Breast epithelium (tissue), 4 donors: ENCODE measurements at regions of chr11 and their contacts with region 1.

Region 1: GRCh38 chr11:87840786-87841185 is 334.5 kb downstream of the RAB38 start:
- DNase-seq: no peak
- H3K4me3 ChIP-seq: no peak overlapping the region
- H3K27ac ChIP-seq: no peak overlapping the region
- H3K4me1 ChIP-seq: no peaks in the 10 kb centered on the region
- H3K27me3 ChIP-seq: no peaks in the 10 kb centered on the region
- CTCF ChIP-seq: no peak
- POLR2A ChIP-seq: no peak

Region 2: GRCh38 chr11:87803748-87804147 is 37.0 kb before region 1 on chr11:
- intact Hi-C with region 1: loop called (anchors 2 kb)
- DNase-seq: no peak
- H3K4me3 ChIP-seq: no peak overlapping the region
- H3K27ac ChIP-seq: no peak overlapping the region
- H3K4me1 ChIP-seq: no peaks in the 10 kb centered on the region
- H3K27me3 ChIP-seq: no peaks in the 10 kb centered on the region
- CTCF ChIP-seq: no peak
- POLR2A ChIP-seq: no peak